CD8-positive, alpha-beta memory T cell (primary cell): ENCODE measurements at regions of chr17 and their contacts with region 1.

Region 1: DNA sequence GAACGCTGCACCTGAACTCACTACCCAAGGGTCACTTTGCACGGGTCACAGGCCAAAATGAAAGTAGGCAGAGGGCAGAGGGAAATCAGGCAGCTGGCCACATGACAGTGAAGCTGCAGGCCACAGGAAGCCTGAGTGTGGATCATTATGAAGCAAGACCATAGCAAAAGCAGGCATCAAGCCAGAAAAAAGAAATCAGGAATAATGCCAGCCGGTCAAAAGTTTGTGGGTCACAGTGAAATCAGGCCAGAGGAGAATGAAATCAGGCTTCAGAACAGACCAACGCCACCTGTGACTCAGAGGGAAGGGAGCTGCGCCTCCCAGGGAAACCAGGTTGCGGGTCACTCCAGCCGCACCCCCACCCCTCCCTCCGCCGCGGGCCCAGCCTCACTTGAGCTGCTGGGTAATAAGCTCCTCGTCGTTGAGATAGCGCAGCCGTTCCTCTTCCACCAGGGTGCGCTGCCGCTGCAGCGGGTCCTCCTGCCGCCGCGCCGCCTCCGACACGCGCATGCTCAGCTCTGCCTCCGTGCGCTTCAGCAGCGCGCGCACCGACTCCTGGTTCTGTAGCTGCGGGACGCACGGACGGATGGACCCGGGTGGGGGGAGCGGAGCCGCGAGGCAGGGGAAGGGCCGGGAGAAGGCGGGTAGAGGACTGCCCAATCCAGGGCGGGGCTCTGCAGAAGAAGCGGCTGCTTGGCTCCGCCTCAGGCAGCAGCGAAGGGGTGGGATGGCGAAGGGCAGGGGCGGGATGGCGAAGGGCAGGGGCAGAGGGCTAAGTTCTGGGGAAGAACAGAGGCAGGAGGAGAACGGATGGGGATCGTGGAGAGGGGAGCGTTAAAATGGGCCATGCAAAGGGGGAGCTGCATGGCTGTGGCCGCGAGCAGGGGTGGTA is 47.7 kb downstream of the SRCIN1 start:
- DNase-seq: peak; percentile 82 to 89 (median 83)
- H3K4me3 ChIP-seq: peak overlapping the region; percentile 89
- H3K4me3 Mint-ChIP-seq: peak overlapping the region; percentile 93 to 99 (median 98)
- H3K27ac ChIP-seq: no peak overlapping the region
- H3K27ac Mint-ChIP-seq: peak overlapping the region in 5 of 8 donors; percentile 14 to 94 (median 82)
- H3K4me1 ChIP-seq: peaks cover 22% of the 10 kb centered on the region
- H3K4me1 Mint-ChIP-seq: peaks cover 22 to 39% (median 24%) of the 10 kb centered on the region in 3 donors
- H3K27me3 ChIP-seq: peaks cover 30% of the 10 kb centered on the region
- H3K27me3 Mint-ChIP-seq: peaks cover 27 to 29% of the 10 kb centered on the region in 2 donors

Region 2: DNA sequence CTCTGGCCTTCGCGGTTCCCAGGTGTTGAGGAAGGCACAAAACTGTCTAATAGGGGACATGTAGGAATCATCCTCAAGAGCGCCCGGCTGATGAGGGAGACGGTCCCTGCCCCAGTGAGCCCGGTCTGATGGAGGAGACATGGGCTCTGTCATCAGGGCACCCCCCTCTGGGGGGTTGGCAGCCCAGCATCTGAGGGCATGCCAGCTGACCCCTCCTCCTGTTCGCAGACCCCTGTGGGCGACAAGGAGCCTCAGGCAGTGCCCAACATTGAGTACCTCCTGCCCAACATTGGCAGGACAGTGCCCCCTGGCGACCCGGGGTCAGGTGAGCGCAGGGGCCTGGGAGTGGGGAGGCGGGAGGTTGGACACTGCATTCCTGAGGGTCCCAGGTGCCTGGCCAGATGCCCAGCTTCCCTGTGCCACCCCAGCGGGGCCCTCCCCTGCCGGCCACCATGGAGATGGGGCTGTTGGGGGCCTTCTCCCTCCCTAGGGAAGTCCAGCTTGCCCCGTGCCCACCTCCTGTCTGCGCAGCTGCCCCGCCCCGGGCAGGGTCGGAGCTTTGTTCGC is 59.8 kb before region 1 on chr17:
- CTCF ChIA-PET with region 1: no interaction called
- POLR2A ChIA-PET with region 1: no interaction called
- DNase-seq: no peak
- H3K4me3 ChIP-seq: no peak overlapping the region
- H3K4me3 Mint-ChIP-seq: no peak overlapping the region
- H3K27ac ChIP-seq: no peak overlapping the region
- H3K27ac Mint-ChIP-seq: no peak overlapping the region
- H3K4me1 ChIP-seq: no peaks in the 10 kb centered on the region
- H3K4me1 Mint-ChIP-seq: no peaks in the 10 kb centered on the region
- H3K27me3 ChIP-seq: no peaks in the 10 kb centered on the region
- H3K27me3 Mint-ChIP-seq: peaks cover 3 to 10% of the 10 kb centered on the region in 2 donors

Region 3: GRCh38 chr17:38584350-38584925 is 26.4 kb after region 1 on chr17:
- CTCF ChIA-PET with region 1: interaction called, 128 read pairs
- POLR2A ChIA-PET with region 1: no interaction called
- DNase-seq: peak; percentile 49 to 64 (median 57)
- H3K4me3 ChIP-seq: no peak overlapping the region
- H3K4me3 Mint-ChIP-seq: peak overlapping the region in 2 of 7 donors; percentile 54 to 67
- H3K27ac ChIP-seq: no peak overlapping the region
- H3K27ac Mint-ChIP-seq: peak overlapping the region in 1 of 8 donors; percentile 2
- H3K4me1 ChIP-seq: peaks cover 6% of the 10 kb centered on the region
- H3K4me1 Mint-ChIP-seq: peaks cover 7 to 8% (median 7%) of the 10 kb centered on the region in 3 donors
- H3K27me3 ChIP-seq: peaks cover 46% of the 10 kb centered on the region
- H3K27me3 Mint-ChIP-seq: peaks cover 60 to 81% of the 10 kb centered on the region in 2 donors

Region 4: DNA sequence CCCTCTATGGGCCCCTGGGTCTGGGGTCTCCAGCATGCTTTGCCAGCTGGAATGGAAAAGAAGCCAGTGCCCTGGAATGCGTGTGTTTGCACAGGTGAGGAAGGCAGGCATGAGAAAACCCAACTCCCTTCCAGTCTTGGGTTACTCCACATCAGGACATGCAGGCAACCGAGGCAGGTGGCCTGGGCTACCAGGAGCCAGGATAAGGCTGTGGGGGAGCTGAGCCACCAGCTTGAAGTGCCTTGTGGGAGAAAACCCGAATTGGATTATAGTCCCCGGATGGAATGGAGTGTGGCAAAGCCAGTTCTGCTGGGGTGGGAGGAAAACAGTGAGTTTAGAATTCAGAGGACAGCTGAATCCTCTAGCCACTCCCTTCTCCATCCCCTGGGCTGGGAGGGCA is 40.5 kb after region 1 on chr17:
- CTCF ChIA-PET with region 1: interaction called, 18 read pairs
- POLR2A ChIA-PET with region 1: no interaction called
- DNase-seq: no peak
- H3K4me3 ChIP-seq: no peak overlapping the region
- H3K4me3 Mint-ChIP-seq: no peak overlapping the region
- H3K27ac ChIP-seq: no peak overlapping the region
- H3K27ac Mint-ChIP-seq: no peak overlapping the region
- H3K4me1 ChIP-seq: no peaks in the 10 kb centered on the region
- H3K4me1 Mint-ChIP-seq: peaks cover 0 to 12% (median 4%) of the 10 kb centered on the region in 3 donors
- H3K27me3 ChIP-seq: peaks cover 25% of the 10 kb centered on the region
- H3K27me3 Mint-ChIP-seq: peaks cover 48 to 91% of the 10 kb centered on the region in 2 donors

Region 5: GRCh38 chr17:38667099-38667786 is 109.2 kb after region 1 on chr17:
- CTCF ChIA-PET with region 1: interaction called, 69 read pairs
- POLR2A ChIA-PET with region 1: interaction called, 5 read pairs
- DNase-seq: peak; percentile 39 to 66 (median 44)
- H3K4me3 ChIP-seq: no peak overlapping the region
- H3K4me3 Mint-ChIP-seq: no peak overlapping the region
- H3K27ac ChIP-seq: no peak overlapping the region
- H3K27ac Mint-ChIP-seq: peak overlapping the region in 1 of 8 donors; percentile 1
- H3K4me1 ChIP-seq: no peaks in the 10 kb centered on the region
- H3K4me1 Mint-ChIP-seq: peaks cover 0 to 5% (median 1%) of the 10 kb centered on the region in 3 donors
- H3K27me3 ChIP-seq: peaks cover 12% of the 10 kb centered on the region
- H3K27me3 Mint-ChIP-seq: peaks cover 41 to 65% of the 10 kb centered on the region in 2 donors

Region 6: GRCh38 chr17:38729886-38730525 is 171.9 kb after region 1 on chr17 and contains the start of gene CISD3:
- CTCF ChIA-PET with region 1: interaction called, 13 read pairs
- POLR2A ChIA-PET with region 1: interaction called, 4 read pairs
- DNase-seq: peak; percentile 83 to 89 (median 85)
- H3K4me3 ChIP-seq: peak within 1 kb of the TSS; percentile 83
- H3K4me3 Mint-ChIP-seq: peak within 1 kb of the TSS; percentile 90 to 100 (median 97)
- H3K27ac ChIP-seq: peak within 1 kb of the TSS; percentile 64
- H3K27ac Mint-ChIP-seq: peak within 1 kb of the TSS; percentile 95 to 99 (median 98)
- H3K4me1 ChIP-seq: peaks cover 66% of the 10 kb centered on the region
- H3K4me1 Mint-ChIP-seq: peaks cover 78 to 92% (median 84%) of the 10 kb centered on the region in 3 donors
- H3K27me3 ChIP-seq: no peaks in the 10 kb centered on the region
- H3K27me3 Mint-ChIP-seq: no peaks in the 10 kb centered on the region
- total RNA-seq, gene CISD3: 58.2 to 59.6 TPM